ENCODE measurements at regions of chr16 and their contacts with region 1.

Region 1: GRCh38 chr16:66275775-66276428 is 90.6 kb upstream of the CDH5 start:
- DNase-seq: no peak

Region 2: GRCh38 chr16:65038100-65038499 is 1237.8 kb before region 1 on chr16:
- intact Hi-C with region 1: loop called in 1 of 2 experiments (anchors 5 kb)
- DNase-seq: no peak

Region 3: DNA sequence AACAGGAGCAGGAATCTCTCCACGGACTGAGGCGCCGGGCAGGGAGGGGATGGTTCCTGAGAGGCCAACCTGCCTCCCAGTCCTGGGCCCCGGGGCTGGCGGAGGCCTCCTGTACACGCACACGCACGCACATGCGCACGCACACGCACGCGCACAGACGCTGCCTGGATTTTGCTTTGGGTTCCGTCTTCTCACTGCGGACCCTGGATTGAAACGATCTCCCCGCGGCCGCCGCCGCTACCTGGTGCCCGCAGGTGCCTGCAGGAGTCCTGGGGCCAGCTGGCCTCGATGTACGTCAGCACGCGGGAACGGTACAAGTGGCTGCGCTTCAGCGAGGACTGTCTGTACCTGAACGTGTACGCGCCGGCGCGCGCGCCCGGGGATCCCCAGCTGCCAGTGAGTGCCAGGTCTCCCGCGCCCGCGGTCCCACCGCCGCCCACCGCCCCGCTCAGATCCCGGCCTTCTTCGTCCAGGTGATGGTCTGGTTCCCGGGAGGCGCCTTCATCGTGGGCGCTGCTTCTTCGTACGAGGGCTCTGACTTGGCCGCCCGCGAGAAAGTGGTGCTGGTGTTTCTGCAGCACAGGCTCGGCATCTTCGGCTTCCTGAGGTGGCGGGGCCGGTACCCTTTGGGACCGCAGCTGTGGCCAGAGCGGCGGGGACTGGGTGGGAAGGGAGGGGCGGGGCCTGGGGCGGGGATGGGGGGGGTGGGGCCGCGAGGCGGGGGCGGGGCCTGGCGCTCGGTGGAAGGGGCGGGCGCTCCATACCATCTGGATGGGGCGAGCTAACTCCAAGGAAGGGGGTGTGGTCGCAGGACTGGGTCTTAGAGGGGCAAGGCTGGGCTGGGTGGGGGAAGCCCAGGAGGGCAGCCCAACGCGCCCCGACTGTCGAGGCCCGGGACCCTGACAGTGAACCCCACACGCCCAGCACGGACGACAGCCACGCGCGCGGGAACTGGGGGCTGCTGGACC is 724.8 kb after region 1 on chr16:
- intact Hi-C with region 1: no loop called
- DNase-seq: no peak

Measured in posterior vena cava (tissue), 2 donors.